ENCODE measurements at regions of chr16 and their contacts with region 1.

Region 1: DNA sequence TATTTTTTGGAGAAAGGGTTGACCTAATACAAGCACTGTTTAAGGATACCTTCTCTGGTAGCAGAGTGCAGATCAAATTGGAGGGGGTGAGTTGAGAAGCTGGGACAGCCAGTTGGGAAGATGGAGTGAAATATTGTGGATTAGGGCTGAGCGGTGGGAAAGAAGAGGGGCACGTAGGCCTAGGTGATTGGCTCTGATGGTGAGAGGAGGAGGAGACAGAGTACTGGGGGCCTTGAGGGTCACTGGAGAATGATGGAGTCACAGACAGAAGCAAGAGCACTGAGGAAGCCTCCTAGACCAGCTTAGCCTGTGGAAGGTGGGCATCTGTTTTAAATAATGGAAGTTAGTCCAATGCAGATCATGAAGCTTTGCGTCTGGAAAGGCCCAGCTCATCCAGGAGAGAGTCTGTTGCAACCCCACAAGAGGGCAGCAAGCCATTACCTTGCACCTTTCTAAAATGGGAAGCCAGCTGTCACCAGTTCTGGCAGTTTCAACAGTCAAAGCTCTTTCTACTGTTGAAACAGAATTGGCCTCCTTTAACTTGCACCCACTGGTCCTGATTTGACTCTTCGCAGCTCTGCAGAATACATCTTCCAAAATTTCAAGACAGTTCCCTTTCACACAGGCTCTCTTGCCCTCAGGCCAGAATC is 11.8 kb downstream of the SLC9A5 start:
- DNase-seq: peak; percentile 19
- H3K4me3 ChIP-seq: no peak overlapping the region
- CTCF ChIP-seq: peak; percentile 77

Region 2: GRCh38 chr16:67104061-67104460 is 156.5 kb before region 1 on chr16:
- CTCF ChIA-PET with region 1: no interaction called
- POLR2A ChIA-PET with region 1: no interaction called
- DNase-seq: no peak
- H3K4me3 ChIP-seq: no peak overlapping the region
- CTCF ChIP-seq: peak; percentile 38

Region 3: GRCh38 chr16:67183627-67184328 is 76.8 kb before region 1 on chr16 and contains the start of gene MATCAP1:
- CTCF ChIA-PET with region 1: no interaction called
- POLR2A ChIA-PET with region 1: no interaction called
- DNase-seq: peak; percentile 82
- H3K4me3 ChIP-seq: peak within 1 kb of the TSS; percentile 74
- CTCF ChIP-seq: no peak

Region 4: DNA sequence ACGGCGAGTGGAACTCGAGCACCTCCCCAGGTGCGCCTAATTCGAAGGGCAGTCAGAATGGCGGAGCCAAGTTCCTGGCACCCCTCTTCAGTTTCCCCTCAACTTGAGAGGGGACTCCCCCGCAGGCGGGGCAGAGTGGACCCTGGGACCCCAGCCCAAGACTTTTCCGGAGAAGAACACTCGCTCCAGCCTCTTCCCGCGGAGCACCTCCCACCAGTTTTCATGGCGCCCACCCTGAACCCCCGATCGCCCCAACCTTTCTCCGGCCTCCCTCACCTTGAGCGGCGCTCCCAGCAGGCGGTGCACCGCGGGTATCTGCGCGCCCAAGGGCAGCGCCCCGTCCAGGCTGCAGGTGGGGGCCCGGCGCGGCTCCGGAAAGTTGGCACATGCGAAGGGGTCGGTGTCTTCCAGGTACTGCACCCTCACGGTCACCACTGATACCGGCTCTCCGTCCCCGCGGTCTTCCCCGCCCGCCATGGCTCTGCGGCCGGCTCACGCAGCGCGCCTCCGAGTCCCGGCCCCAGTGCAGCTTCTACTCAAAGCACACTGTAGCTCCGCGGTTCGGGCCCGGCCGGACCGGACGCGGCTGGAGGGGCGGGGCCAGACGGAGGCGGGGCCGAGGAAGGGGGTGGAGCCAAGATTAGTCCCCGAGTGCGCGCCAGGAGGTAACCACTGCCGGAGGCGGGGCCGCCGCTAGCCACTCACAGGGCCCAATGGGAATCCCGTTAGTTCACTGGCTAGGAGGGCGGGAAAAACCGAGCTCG is 13.4 kb before region 1 on chr16 and contains the start of gene FHOD1:
- CTCF ChIA-PET with region 1: interaction called, 48 read pairs
- POLR2A ChIA-PET with region 1: interaction called, 6 read pairs
- DNase-seq: peak; percentile 52
- H3K4me3 ChIP-seq: peak within 1 kb of the TSS; percentile 78
- CTCF ChIP-seq: no peak

Region 5: DNA sequence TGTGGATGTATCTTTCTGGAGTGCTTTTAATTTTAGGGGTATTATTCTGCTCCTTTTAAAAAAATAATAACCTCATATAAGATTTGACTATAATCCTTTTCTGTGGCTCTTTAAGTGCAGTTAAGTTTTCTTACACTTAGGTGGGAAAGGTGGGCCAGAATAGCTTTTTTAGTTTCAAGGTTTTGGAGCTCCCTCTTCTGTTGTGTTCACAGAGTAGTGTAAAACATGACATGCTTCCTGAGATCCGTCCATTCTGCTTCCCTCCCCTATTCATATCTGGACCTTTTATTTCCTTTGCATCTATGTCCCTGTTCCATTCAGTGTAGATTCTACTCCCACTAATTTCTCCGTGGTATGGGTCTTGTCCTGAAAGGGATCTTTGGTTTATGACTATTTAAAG is 78.9 kb after region 1 on chr16:
- CTCF ChIA-PET with region 1: interaction called, 65 read pairs
- POLR2A ChIA-PET with region 1: no interaction called
- DNase-seq: no peak
- H3K4me3 ChIP-seq: no peak overlapping the region
- CTCF ChIP-seq: no peak

Region 6: GRCh38 chr16:67399181-67399733 is 138.7 kb after region 1 on chr16:
- CTCF ChIA-PET with region 1: interaction called, 11 read pairs
- POLR2A ChIA-PET with region 1: no interaction called
- DNase-seq: no peak
- H3K4me3 ChIP-seq: no peak overlapping the region
- CTCF ChIP-seq: peak; percentile 83

Region 7: GRCh38 chr16:67447508-67448076 is 187.0 kb after region 1 on chr16:
- CTCF ChIA-PET with region 1: interaction called, 16 read pairs
- POLR2A ChIA-PET with region 1: no interaction called
- DNase-seq: no peak
- H3K4me3 ChIP-seq: no peak overlapping the region
- CTCF ChIP-seq: peak; percentile 34

Measured in AG04449 (cell line).